ENCODE measurements at regions of chr16 and their contacts with region 1.

Region 1: GRCh38 chr16:69270395-69270794 is 40.8 kb upstream of the VPS4A start:
- DNase-seq: no peak
- H3K4me3 ChIP-seq: no peak overlapping the region
- H3K27ac ChIP-seq: no peak overlapping the region
- H3K4me1 ChIP-seq: no peaks in the 10 kb centered on the region
- H3K27me3 ChIP-seq: no peaks in the 10 kb centered on the region
- CTCF ChIP-seq: no peak
- POLR2A ChIP-seq: no peak

Region 2: GRCh38 chr16:68893710-68894705 is 376.4 kb before region 1 on chr16:
- intact Hi-C with region 1: no loop called
- DNase-seq: no peak
- H3K4me3 ChIP-seq: no peak overlapping the region
- H3K27ac ChIP-seq: no peak overlapping the region
- H3K4me1 ChIP-seq: no peaks in the 10 kb centered on the region
- H3K27me3 ChIP-seq: no peaks in the 10 kb centered on the region
- CTCF ChIP-seq: no peak
- POLR2A ChIP-seq: no peak

Region 3: GRCh38 chr16:69150146-69150865 is 120.1 kb before region 1 on chr16:
- intact Hi-C with region 1: no loop called
- DNase-seq: no peak
- H3K4me3 ChIP-seq: no peak overlapping the region
- H3K27ac ChIP-seq: peak overlapping the region in 1 of 2 donors; percentile 19
- H3K4me1 ChIP-seq: no peaks in the 10 kb centered on the region
- H3K27me3 ChIP-seq: no peaks in the 10 kb centered on the region
- CTCF ChIP-seq: peak; percentile 75 to 83 (median 76)
- POLR2A ChIP-seq: no peak

Region 4: DNA sequence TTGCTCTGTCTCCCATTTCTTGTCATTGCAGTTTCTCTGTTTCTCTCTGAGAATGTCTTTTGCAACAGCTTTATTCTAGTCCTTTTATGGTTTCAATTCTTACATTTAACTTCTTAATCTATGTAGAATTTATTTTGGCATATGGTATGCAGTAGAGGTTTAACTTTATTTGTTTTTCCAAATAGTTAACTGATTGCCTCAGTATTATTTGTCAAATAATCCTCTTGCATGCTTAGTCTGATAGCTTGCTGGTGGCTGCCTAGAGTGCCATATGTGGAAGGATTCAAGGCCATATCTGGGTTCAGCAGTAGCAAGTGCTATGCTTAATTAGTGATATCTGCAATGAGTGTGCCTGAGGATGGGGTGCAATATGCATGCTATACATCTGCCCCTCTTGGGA is 76.5 kb before region 1 on chr16:
- intact Hi-C with region 1: loop called (anchors 2 kb)
- DNase-seq: no peak
- H3K4me3 ChIP-seq: no peak overlapping the region
- H3K27ac ChIP-seq: no peak overlapping the region
- H3K4me1 ChIP-seq: no peaks in the 10 kb centered on the region
- H3K27me3 ChIP-seq: no peaks in the 10 kb centered on the region
- CTCF ChIP-seq: no peak
- POLR2A ChIP-seq: no peak

Measured in breast epithelium (tissue), 4 donors.